ENCODE measurements at regions of chr22 and their contacts with region 1.

Region 1: GRCh38 chr22:36331306-36331911 is 56.4 kb downstream of the MYH9 start:
- DNase-seq: peak; percentile 81
- ATAC-seq: peak; percentile 83
- H3K4me3 ChIP-seq: peak overlapping the region; percentile 59; the same call in 1 of the 2 replicates
- H3K27ac ChIP-seq: peak overlapping the region; percentile 99
- H3K4me1 ChIP-seq: peaks cover 59% of the 10 kb centered on the region
- H3K27me3 ChIP-seq: no peaks in the 10 kb centered on the region
- CTCF ChIP-seq: no peak
- EP300 ChIP-seq: peak in 1 of 2 experiments; percentile 77; a peak in 2 of 4 replicates
- POLR2A ChIP-seq: peak; percentile 58
- RAD21 ChIP-seq: no peak

Region 2: GRCh38 chr22:36301384-36301828 is 30.0 kb before region 1 on chr22:
- CTCF ChIA-PET with region 1: interaction called, 14 read pairs
- POLR2A ChIA-PET with region 1: interaction called, 3 read pairs
- RAD21 ChIA-PET with region 1: interaction called, 6 read pairs
- SMC1A ChIA-PET with region 1: interaction called, 13 read pairs
- in situ Hi-C with region 1: no loop called
- intact Hi-C with region 1: no loop called
- DNase-seq: no peak
- ATAC-seq: peak; percentile 91
- H3K4me3 ChIP-seq: no peak overlapping the region
- H3K27ac ChIP-seq: no peak overlapping the region
- H3K4me1 ChIP-seq: no peaks in the 10 kb centered on the region
- H3K27me3 ChIP-seq: no peaks in the 10 kb centered on the region
- CTCF ChIP-seq: peak; percentile 92 to 95 (median 92)
- EP300 ChIP-seq: no peak
- POLR2A ChIP-seq: peak; percentile 69
- RAD21 ChIP-seq: peak; percentile 78

Region 3: GRCh38 chr22:36365020-36365411 is 33.6 kb after region 1 on chr22:
- CTCF ChIA-PET with region 1: interaction called, 10 read pairs
- POLR2A ChIA-PET with region 1: interaction called, 18 read pairs
- RAD21 ChIA-PET with region 1: interaction called, 10 read pairs
- SMC1A ChIA-PET with region 1: interaction called, 24 read pairs
- in situ Hi-C with region 1: no loop called
- intact Hi-C with region 1: no loop called
- DNase-seq: no peak
- ATAC-seq: peak; percentile 85
- H3K4me3 ChIP-seq: no peak overlapping the region
- H3K27ac ChIP-seq: peak overlapping the region; percentile 58
- H3K4me1 ChIP-seq: peaks cover 74% of the 10 kb centered on the region
- H3K27me3 ChIP-seq: no peaks in the 10 kb centered on the region
- CTCF ChIP-seq: no peak
- EP300 ChIP-seq: peak in 1 of 2 experiments; percentile 50; a peak in 1 of 4 replicates
- POLR2A ChIP-seq: 0 out of 2 replicates have a peak, but pooled peaks have one; percentile 33
- RAD21 ChIP-seq: peak; percentile 12; the same call in 1 of the 2 replicates

Region 4: DNA sequence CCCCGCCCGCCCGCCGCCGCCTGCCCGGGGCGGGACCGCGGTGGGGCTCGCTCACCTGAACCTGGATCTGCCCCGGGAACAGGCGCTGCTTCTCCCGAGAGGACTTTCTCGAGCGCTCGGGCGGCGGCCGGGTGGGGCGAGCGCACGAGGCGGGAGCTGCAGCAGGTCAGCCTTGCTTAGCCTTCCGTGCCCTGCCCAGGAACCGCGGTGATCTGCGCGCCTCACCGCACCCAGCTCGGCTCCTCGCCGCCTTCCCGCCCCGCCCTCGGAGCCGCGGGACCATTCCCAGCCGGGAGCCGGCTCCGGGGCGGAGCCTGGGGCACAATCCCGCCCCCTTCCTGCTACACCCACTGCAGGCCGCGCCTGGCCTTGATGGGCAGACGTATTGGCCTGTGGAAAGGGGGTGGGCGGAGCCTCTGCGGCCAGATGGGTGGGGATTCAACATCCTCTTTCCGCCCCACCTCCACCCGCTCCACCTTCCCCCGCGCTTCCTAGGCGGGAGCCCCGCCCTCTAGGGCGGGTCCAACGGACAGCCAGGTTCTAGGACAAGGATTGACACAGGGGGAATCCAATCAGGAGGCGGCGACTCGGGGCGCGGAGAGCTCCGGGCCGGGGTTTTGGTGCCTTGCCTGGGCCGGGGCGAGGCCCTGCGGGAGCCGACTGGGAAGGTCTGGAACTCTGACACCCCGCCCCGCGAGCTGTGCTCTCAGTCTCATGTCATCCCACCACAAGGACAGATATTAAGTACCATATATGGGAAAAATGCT is 56.5 kb after region 1 on chr22 and contains the start of gene MYH9:
- CTCF ChIA-PET with region 1: interaction called, 8 read pairs
- POLR2A ChIA-PET with region 1: interaction called, 53 read pairs
- RAD21 ChIA-PET with region 1: interaction called, 40 read pairs
- SMC1A ChIA-PET with region 1: interaction called, 23 read pairs
- in situ Hi-C with region 1: no loop called
- intact Hi-C with region 1: loop called (anchors 1 kb)
- DNase-seq: peak; percentile 96
- ATAC-seq: peak; percentile 79
- H3K4me3 ChIP-seq: peak within 1 kb of the TSS; percentile 74
- H3K27ac ChIP-seq: peak within 1 kb of the TSS; percentile 88
- H3K4me1 ChIP-seq: peaks cover 8% of the 10 kb centered on the region
- H3K27me3 ChIP-seq: no peaks in the 10 kb centered on the region
- CTCF ChIP-seq: no peak
- EP300 ChIP-seq: no peak
- POLR2A ChIP-seq: peak; percentile 93
- RAD21 ChIP-seq: no peak
- polyA plus RNA-seq, gene MYH9: 5.1 to 8.1 TPM

Region 5: DNA sequence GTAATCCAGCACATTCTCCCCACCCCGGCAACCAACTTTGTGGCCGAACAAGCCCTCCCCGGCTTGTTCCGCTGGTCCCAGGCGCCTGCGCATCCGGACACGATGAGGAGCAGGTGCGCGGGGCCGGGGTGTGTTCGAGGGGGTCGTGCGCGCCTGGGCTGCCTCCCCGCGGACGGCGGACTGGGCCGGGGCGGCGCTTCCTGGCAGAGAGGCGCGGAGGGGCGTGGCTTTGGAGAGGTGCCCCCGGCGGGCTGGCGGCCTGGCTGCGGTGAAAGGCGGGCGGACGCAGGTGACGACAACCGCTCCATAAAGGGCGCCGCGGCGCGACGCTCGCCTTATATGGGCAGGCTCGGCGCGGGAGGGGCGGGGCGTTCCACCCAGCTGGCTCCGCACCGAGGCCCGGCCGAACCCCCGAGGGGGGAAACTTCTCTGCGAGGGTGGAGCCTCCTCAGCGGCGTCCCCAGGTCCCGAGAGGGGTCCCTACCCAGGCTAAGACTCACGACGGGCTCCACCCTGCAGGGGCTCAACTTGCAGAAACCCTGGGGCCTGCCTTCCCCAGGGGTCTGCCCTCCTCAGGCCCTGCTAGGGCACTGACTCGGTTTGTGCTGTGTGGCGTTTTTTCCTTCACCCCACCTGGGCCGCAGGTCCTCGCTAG is 123.6 kb after region 1 on chr22:
- CTCF ChIA-PET with region 1: interaction called, 8 read pairs
- POLR2A ChIA-PET with region 1: interaction called, 7 read pairs
- RAD21 ChIA-PET with region 1: interaction called, 9 read pairs
- SMC1A ChIA-PET with region 1: interaction called, 5 read pairs
- in situ Hi-C with region 1: no loop called
- intact Hi-C with region 1: loop called (anchors 5 kb)
- DNase-seq: peak; percentile 50
- ATAC-seq: peak; percentile 80
- H3K4me3 ChIP-seq: peak overlapping the region; percentile 83
- H3K27ac ChIP-seq: peak overlapping the region; percentile 73
- H3K4me1 ChIP-seq: peaks cover 37% of the 10 kb centered on the region
- H3K27me3 ChIP-seq: no peaks in the 10 kb centered on the region
- CTCF ChIP-seq: peak in 2 of 3 experiments; percentile 10 to 23; a peak in 2 of 6 replicates
- EP300 ChIP-seq: no peak; a peak in 1 of 4 replicates
- POLR2A ChIP-seq: peak; percentile 82
- RAD21 ChIP-seq: peak; percentile 30; the same call in 1 of the 2 replicates

Measured in GM12878 (cell line).